Left cardiac atrium (tissue), 4 donors: ENCODE measurements at regions of chr17 and their contacts with region 1.

Region 1: GRCh38 chr17:79707931-79708891 is 22.5 kb upstream of the ENPP7 start:
- DNase-seq: no peak
- ATAC-seq: peak; percentile 41 to 43

Region 2: DNA sequence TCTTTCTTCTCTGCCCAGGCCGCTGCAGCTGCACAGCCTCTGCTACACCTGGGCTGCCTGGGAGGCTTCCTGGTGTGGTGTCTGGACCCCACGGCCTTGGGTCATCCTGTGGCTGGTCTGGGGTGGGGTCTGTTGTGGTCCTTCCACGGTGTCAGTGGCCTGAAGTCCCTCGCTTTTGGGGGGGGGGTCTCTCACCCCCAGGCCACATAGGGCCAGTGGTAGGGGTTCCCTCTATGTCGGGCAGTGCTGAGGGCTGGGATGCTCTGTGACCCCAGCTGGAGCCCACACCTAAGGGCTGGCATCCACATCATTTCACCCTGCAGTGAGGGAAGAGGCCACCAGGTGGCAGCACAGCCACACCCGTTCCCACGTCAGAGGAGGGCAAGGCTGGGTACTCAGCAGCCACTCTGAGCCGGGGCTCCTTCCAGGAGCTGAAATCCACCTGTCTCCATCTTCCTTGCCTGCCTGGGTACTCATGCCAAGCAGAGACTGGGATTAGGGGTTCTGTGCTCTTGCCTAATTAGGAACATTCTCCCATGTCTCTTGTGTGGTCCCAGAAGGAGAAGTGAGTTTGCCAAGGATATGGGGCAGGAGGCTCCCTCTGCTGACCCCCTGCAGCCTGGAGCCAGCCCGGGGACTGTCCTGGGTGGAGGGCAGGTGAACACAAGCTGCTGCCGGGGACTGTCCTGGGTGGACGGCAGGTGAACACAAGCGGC is 620.6 kb before region 1 on chr17:
- intact Hi-C with region 1: loop called in 1 of 2 experiments (anchors 5 kb)
- DNase-seq: peak; percentile 75
- ATAC-seq: peak; percentile 61 to 64

Region 3: GRCh38 chr17:79400989-79401703 is 307.1 kb before region 1 on chr17:
- intact Hi-C with region 1: loop called (anchors 10 kb)
- DNase-seq: peak; percentile 64
- ATAC-seq: peak; percentile 76 to 80

Region 4: DNA sequence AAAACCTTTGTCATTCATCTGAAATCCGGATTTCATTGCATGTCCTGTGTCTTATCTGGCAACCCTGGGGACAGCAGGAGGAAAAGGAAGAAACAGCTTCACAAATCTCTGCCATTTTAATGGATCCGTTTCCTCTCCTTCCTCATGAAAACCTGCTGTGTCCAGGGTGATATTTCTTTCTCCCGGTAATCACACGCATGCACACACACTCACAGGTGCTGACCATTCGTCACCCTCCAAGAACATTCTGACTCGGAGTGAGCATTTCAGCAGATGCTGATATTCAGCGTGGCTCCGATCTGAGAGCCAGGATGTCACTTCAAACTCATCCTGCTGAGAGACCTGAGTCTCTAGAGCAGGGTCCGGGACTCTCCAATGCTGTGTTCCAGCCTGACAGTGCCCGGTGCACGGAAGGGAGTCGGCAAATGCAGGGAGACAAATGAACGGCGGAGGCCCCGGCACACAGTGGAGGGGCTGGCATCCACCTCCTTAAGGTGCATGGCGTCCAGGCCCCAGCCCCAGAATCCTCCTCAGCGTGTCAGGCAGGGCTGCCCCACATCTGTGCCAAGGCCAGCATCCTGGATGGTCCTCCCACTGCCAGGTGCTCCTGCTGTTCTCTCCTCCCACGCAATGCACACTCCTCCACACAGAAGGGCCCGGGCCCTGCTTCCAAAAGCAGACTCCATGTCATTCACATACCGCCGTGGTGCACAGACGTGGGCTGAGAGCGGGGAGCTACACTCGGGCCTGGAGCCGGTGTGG is 168.1 kb before region 1 on chr17:
- intact Hi-C with region 1: no loop called
- DNase-seq: no peak
- ATAC-seq: no peak